Caco-2 (cell line): ENCODE measurements at regions of chr12 and their contacts with region 1.

Region 1: GRCh38 chr12:109277899-109278762 is 31.0 kb downstream of the FOXN4 start:
- DNase-seq: peak in 1 of 2 experiments; percentile 70
- H3K4me3 ChIP-seq: no peak overlapping the region
- H3K4me3 Mint-ChIP-seq: no peak overlapping the region
- H3K27ac Mint-ChIP-seq: peak overlapping the region; percentile 45
- H3K4me1 ChIP-seq: peaks cover 15% of the 10 kb centered on the region
- H3K4me1 Mint-ChIP-seq: peaks cover 15% of the 10 kb centered on the region
- H3K27me3 ChIP-seq: no peaks in the 10 kb centered on the region
- H3K27me3 Mint-ChIP-seq: no peaks in the 10 kb centered on the region
- CTCF ChIP-seq: peak in 1 of 2 experiments; percentile 12

Region 2: GRCh38 chr12:109110988-109111495 is 167.1 kb before region 1 on chr12:
- CTCF ChIA-PET with region 1: no interaction called
- POLR2A ChIA-PET with region 1: no interaction called
- intact Hi-C with region 1: no loop called
- DNase-seq: peak; percentile 83 to 84
- H3K4me3 ChIP-seq: peak overlapping the region; percentile 62
- H3K4me3 Mint-ChIP-seq: peak overlapping the region; percentile 71
- H3K27ac Mint-ChIP-seq: peak overlapping the region; percentile 54
- H3K4me1 ChIP-seq: peaks cover 8% of the 10 kb centered on the region; the same call in 1 of the 2 replicates
- H3K4me1 Mint-ChIP-seq: peaks cover 6% of the 10 kb centered on the region
- H3K27me3 ChIP-seq: no peaks in the 10 kb centered on the region
- H3K27me3 Mint-ChIP-seq: no peaks in the 10 kb centered on the region
- CTCF ChIP-seq: no peak

Region 3: DNA sequence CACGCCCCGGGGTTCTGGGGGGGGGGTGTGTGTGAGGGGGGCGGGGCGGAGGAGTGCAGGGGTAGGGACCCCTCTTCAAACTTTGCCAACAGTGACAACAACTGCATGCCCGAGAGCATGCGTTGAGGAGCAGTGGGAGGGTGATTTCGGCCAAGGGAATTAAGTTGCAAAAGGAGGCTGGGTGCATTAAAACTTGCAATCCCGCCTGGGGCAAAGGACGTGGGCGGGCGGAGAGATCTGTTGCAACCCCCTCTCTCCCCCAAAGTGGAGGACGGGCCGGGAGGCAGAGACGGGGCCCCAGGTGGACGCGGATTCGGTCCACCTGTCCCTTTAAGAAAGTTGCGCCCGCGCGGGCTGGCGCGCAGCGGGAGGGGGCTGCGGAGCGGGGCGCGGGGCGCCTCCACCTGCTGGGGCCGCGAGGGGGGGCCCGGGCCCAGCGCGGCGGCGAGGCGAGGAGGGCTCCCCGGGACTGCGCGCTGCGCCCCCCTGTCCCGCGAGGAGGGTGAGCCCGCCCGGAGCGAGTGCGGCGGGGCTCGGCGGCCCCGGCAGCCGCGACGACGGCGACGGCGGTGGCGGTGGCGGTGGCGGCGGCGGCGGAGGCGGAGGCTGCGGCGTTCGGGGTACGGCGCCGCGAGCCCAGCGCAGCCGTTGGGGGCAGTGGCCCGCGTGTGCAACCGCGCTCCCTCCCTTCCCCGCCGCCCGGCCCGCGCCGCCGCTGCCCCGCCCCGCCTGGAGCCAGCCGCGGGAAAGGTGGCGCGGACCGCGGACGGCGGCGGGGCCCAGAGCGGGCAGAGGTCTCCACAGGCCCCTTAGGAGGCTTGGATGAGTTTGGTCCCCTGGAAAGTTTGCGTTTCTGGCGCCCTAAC is 31.5 kb after region 1 on chr12:
- CTCF ChIA-PET with region 1: interaction called, 6 read pairs
- POLR2A ChIA-PET with region 1: no interaction called
- intact Hi-C with region 1: loop called (anchors 2 kb)
- DNase-seq: peak in 1 of 2 experiments; percentile 67
- H3K4me3 ChIP-seq: peak overlapping the region; percentile 57
- H3K4me3 Mint-ChIP-seq: peak overlapping the region; percentile 94
- H3K27ac Mint-ChIP-seq: no peak overlapping the region
- H3K4me1 ChIP-seq: peaks cover 18% of the 10 kb centered on the region
- H3K4me1 Mint-ChIP-seq: peaks cover 14% of the 10 kb centered on the region
- H3K27me3 ChIP-seq: no peaks in the 10 kb centered on the region
- H3K27me3 Mint-ChIP-seq: peaks cover 5% of the 10 kb centered on the region
- CTCF ChIP-seq: no peak

Region 4: DNA sequence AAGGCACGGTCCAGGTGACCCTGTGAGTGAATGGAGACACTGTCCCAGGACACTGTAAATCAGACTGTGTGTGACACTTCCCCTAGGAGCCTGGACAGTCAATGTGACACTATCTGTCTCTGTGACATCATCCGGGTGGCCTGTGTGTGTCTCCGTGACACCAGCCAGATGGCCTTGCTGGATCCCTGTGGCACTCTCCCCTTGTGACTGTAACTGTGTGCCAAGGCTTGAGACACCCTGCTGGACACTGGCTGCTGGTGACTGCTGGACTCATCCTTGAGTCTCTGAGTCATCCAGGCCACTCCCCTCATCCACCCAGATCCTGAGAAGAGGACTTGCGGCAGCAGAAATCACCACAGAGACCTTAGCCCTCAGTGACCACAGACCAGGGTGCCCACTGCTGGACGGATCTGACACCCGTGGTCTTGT is 347.0 kb after region 1 on chr12:
- CTCF ChIA-PET with region 1: no interaction called
- POLR2A ChIA-PET with region 1: no interaction called
- intact Hi-C with region 1: no loop called
- DNase-seq: no peak
- H3K4me3 ChIP-seq: no peak overlapping the region
- H3K4me3 Mint-ChIP-seq: no peak overlapping the region
- H3K27ac Mint-ChIP-seq: peak overlapping the region; percentile 50
- H3K4me1 ChIP-seq: no peaks in the 10 kb centered on the region
- H3K4me1 Mint-ChIP-seq: peaks cover 8% of the 10 kb centered on the region
- H3K27me3 ChIP-seq: no peaks in the 10 kb centered on the region
- H3K27me3 Mint-ChIP-seq: no peaks in the 10 kb centered on the region
- CTCF ChIP-seq: no peak